Activated CD4-positive, alpha-beta T cell treated with anti-CD3 and anti-CD28 coated beads for 36 hours (primary cell): ENCODE measurements at regions of chr7 and their contacts with region 1.

Region 1: GRCh38 chr7:75914730-75915585 is at the start of gene POR:
- DNase-seq: peak; percentile 97
- ATAC-seq: peak; percentile 89
- H3K4me3 Mint-ChIP-seq: peak within 1 kb of the TSS; percentile 80
- H3K27ac Mint-ChIP-seq: peak within 1 kb of the TSS; percentile 81
- H3K4me1 Mint-ChIP-seq: peaks cover 27% of the 10 kb centered on the region
- H3K27me3 Mint-ChIP-seq: no peaks in the 10 kb centered on the region
- total RNA-seq, gene POR: 24.9 to 33.8 TPM

Region 2: DNA sequence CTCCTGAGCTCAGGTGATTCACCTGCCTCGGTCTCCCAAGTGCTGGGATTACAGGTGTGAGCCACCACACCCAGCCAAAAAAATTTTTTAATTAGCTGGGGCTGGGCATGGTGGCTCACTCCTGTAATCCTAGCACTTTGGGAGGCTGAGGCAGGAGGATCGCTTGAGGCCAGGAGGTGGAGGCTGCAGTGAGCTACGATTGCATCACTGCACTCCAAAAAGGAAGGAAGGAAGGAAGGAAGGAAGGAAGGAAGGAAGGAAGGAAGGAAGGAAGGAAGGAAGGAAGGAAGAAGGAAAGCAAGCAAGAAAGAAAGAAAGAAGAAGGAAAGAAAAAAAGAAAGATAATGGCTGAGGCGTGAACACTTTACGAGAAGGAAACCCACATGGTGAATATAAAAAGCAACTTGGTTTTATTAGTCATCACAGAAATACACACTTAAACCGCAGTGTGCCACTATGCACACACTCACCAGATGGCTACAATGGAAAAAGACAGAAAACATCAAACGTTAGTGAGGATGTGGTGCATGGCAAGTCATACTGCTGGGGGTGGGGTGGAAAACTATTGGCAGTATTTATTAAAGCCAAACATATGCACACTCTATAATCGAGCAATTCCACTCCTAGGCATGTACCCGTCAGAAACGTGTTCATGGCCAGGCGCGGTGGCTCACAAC is 138.5 kb before region 1 on chr7:
- CTCF ChIA-PET with region 1: no interaction called
- POLR2A ChIA-PET with region 1: no interaction called
- intact Hi-C with region 1: loop called (anchors 2 to 5 kb)
- DNase-seq: peak; percentile 75
- ATAC-seq: peak; percentile 96
- H3K4me3 Mint-ChIP-seq: no peak overlapping the region
- H3K27ac Mint-ChIP-seq: peak overlapping the region; percentile 77
- H3K4me1 Mint-ChIP-seq: peaks cover 44% of the 10 kb centered on the region
- H3K27me3 Mint-ChIP-seq: peaks cover 17% of the 10 kb centered on the region

Region 3: DNA sequence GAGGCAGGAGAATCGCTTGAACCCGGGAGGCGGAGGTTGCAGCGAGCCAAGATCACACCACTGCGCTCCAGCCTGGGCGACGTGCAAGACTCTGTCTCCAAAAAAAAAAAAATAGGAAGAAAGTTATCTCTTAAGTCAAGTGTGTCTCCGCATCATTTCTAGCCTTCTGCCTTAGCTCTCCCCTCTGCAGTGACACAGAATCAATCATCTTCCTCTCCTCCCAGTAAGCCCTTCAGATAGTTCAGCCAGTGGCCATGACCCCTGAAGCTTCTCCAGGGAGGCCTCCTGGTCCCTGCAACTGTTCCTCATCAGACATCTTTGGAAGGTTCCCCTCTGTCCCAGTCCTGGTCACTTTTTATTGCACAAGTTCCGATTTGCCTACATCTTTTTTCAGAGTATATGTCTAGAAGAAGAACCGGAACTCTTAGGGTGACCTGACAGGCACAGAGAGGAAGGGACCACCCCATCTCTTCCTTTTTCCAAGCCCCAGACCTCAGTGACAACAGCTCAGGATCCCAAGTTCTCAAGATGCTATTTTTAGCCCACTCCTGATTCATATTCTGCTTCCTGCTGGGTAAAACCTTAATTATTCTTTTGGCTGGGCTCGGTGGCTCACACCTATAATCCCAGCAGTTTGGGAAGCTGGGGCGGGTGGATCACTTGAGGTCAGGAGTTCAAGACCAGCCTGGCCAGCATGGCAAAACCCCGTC is 42.7 kb before region 1 on chr7:
- CTCF ChIA-PET with region 1: no interaction called
- POLR2A ChIA-PET with region 1: no interaction called
- intact Hi-C with region 1: loop called in 1 of 2 experiments (anchors 2 kb)
- DNase-seq: no peak
- ATAC-seq: no peak
- H3K4me3 Mint-ChIP-seq: no peak overlapping the region
- H3K27ac Mint-ChIP-seq: no peak overlapping the region
- H3K4me1 Mint-ChIP-seq: peaks cover 25% of the 10 kb centered on the region
- H3K27me3 Mint-ChIP-seq: no peaks in the 10 kb centered on the region

Region 4: GRCh38 chr7:75994388-75995051 is 79.6 kb after region 1 on chr7 and contains the start of gene TMEM120A:
- CTCF ChIA-PET with region 1: interaction called, 3 read pairs
- POLR2A ChIA-PET with region 1: no interaction called
- intact Hi-C with region 1: loop called (anchors 1 to 5 kb)
- DNase-seq: peak; percentile 97
- ATAC-seq: peak; percentile 99
- H3K4me3 Mint-ChIP-seq: peak within 1 kb of the TSS; percentile 66
- H3K27ac Mint-ChIP-seq: no peak within 1 kb of the TSS
- H3K4me1 Mint-ChIP-seq: peaks cover 29% of the 10 kb centered on the region
- H3K27me3 Mint-ChIP-seq: no peaks in the 10 kb centered on the region
- total RNA-seq, gene TMEM120A: 14.5 to 15.3 TPM

Region 5: DNA sequence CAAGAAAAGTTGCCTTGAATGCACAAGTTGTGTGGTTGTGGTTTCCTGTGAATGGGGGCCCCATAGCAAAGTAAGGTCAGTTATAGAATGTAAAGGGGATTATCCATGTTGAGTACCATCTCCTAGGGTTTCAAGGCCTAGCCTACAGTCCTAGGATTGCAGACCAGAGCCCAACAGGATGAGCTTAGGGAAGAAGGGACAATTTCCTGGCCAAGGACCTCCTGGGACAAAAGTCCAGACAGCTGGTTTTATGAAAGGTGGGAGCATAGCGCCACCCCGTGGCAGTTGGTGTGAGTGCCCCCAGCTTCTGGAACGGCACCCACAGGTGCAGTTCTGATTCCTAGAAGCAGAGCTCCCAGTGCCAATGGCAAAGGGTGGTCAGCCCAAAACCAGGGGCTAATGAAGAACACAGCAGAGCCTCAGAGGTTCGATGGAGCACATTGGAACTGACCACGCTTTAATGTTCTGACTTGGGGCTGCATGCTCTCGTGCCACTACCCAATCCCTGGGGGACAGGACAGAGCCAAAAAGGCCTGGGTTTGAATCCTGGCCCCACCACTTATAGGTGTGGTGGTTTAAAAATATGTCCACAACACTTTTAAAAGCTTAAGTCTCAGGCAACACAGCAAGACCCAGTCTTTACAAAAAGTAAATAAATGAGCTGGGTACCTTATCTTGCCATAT is 105.2 kb after region 1 on chr7:
- CTCF ChIA-PET with region 1: interaction called, 11 read pairs
- POLR2A ChIA-PET with region 1: interaction called, 4 read pairs
- intact Hi-C with region 1: no loop called
- DNase-seq: peak; percentile 84
- ATAC-seq: peak; percentile 82
- H3K4me3 Mint-ChIP-seq: no peak overlapping the region
- H3K27ac Mint-ChIP-seq: no peak overlapping the region
- H3K4me1 Mint-ChIP-seq: peaks cover 8% of the 10 kb centered on the region
- H3K27me3 Mint-ChIP-seq: no peaks in the 10 kb centered on the region

Region 6: DNA sequence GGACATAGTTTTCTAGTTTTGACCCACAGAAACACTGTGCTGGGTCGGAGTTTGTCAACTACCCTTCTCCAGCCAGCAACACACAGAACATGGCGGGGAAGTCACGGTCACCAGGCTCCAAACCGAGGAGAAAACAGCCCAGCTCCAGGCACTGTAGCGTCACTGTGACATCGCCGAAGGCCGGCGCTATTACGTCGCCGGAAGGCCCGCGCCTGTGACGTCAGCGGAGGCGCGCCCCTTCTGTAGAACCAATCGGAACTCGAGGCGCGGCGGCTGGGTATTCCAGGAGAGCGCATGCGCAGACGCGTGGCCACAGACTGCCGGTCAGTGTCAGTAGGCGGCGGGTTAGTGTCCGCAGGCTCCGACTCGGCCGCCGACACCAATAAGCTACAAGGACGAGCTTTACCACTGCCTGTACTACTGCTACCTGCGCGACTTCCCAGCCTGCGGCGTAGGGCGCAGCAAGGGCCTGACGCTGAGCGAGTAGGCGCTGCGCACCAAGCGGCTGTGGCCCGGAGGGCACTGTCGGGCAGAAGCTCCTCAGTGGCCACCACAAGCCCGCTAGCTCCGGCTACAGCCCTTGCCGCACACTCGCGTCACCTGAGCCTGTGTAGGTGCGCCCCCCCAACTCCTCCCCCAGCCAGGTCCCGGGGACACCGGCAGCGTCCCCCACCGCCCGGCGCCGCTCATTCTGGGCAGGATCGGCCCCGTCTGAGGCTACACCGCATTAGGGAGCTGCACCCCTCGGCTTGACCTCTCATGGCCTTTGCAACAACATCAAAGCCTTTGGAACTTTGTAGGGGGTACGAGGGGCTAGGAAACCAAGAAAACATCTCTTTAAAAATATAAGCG is 251.7 kb after region 1 on chr7:
- CTCF ChIA-PET with region 1: no interaction called
- POLR2A ChIA-PET with region 1: no interaction called
- intact Hi-C with region 1: loop called in 1 of 2 experiments (anchors 2 kb)
- DNase-seq: peak; percentile 97
- ATAC-seq: peak; percentile 90
- H3K4me3 Mint-ChIP-seq: peak overlapping the region; percentile 79
- H3K27ac Mint-ChIP-seq: peak overlapping the region; percentile 93
- H3K4me1 Mint-ChIP-seq: peaks cover 8% of the 10 kb centered on the region
- H3K27me3 Mint-ChIP-seq: no peaks in the 10 kb centered on the region